ENCODE measurements at regions of chr12 and their contacts with region 1.

Region 1: GRCh38 chr12:7989827-7990551 is 42.5 kb upstream of the FOXJ2 start:
- DNase-seq: peak; percentile 64
- ATAC-seq: peak; percentile 96
- H3K4me3 Mint-ChIP-seq: peak overlapping the region; percentile 78
- H3K27ac Mint-ChIP-seq: peak overlapping the region; percentile 92
- H3K4me1 Mint-ChIP-seq: peaks cover 29% of the 10 kb centered on the region
- H3K27me3 Mint-ChIP-seq: no peaks in the 10 kb centered on the region

Region 2: DNA sequence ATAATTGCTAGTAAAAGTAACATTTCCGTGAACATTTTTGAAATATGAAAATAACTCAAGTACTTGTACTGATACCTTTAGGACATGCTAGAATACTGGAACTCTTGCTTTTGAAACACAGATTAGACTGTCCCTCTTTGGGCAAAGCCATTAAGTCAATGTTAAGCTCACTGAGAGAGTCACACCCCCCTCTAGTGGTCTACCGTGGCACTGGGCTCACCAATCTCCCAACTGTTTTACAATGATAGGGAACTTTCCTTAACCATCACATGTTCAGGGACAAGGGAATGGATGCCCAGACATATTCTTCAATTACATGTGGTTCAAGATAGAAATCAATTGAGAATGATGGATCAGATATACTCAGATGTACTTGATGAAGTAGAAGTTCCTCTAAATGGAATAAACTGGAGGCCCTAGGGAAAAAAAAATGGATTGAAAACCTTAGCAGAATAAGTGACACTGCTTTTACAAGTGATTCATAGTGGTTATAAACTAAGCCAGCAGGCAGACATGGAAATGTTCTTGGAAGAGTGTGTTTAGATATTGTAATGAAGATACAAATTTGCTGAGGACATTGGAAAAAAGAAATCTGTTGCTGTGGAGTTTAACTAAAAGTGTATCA is 183.0 kb before region 1 on chr12:
- POLR2A ChIA-PET with region 1: no interaction called
- DNase-seq: peak; percentile 54
- ATAC-seq: no peak
- H3K4me3 Mint-ChIP-seq: no peak overlapping the region
- H3K27ac Mint-ChIP-seq: no peak overlapping the region
- H3K4me1 Mint-ChIP-seq: peaks cover 2% of the 10 kb centered on the region
- H3K27me3 Mint-ChIP-seq: peaks cover 7% of the 10 kb centered on the region

Region 3: GRCh38 chr12:7859552-7859951 is 130.4 kb before region 1 on chr12:
- POLR2A ChIA-PET with region 1: no interaction called
- DNase-seq: no peak
- ATAC-seq: no peak
- H3K4me3 Mint-ChIP-seq: no peak overlapping the region
- H3K27ac Mint-ChIP-seq: no peak overlapping the region
- H3K4me1 Mint-ChIP-seq: peaks cover 12% of the 10 kb centered on the region
- H3K27me3 Mint-ChIP-seq: peaks cover 9% of the 10 kb centered on the region

Region 4: GRCh38 chr12:7970475-7971252 is 19.3 kb before region 1 on chr12:
- POLR2A ChIA-PET with region 1: interaction called, 22 read pairs
- DNase-seq: peak; percentile 89
- ATAC-seq: peak; percentile 93
- H3K4me3 Mint-ChIP-seq: peak overlapping the region; percentile 79
- H3K27ac Mint-ChIP-seq: peak overlapping the region; percentile 93
- H3K4me1 Mint-ChIP-seq: peaks cover 30% of the 10 kb centered on the region
- H3K27me3 Mint-ChIP-seq: no peaks in the 10 kb centered on the region